ENCODE measurements at regions of chr3 and their contacts with region 1.

Region 1: GRCh38 chr3:94004301-94004910 is 24.0 kb downstream of the STX19 start:
- DNase-seq: peak in 1 of 2 donors; percentile 74
- ATAC-seq: peak; percentile 80 to 95 (median 93)
- H3K4me3 ChIP-seq: no peak overlapping the region
- H3K4me3 Mint-ChIP-seq: peak overlapping the region; percentile 83
- H3K27ac ChIP-seq: no peak overlapping the region
- H3K27ac Mint-ChIP-seq: peak overlapping the region; percentile 40 to 42
- H3K4me1 ChIP-seq: no peaks in the 10 kb centered on the region
- H3K4me1 Mint-ChIP-seq: peaks cover 0 to 4% of the 10 kb centered on the region in 2 donors
- H3K27me3 ChIP-seq: no peaks in the 10 kb centered on the region
- H3K27me3 Mint-ChIP-seq: no peaks in the 10 kb centered on the region
- CTCF ChIP-seq: peak; percentile 80

Region 2: GRCh38 chr3:94069194-94069813 is 64.9 kb after region 1 on chr3:
- intact Hi-C with region 1: loop called (anchors 1 kb)
- DNase-seq: peak in 1 of 2 donors; percentile 39
- ATAC-seq: peak in 1 of 3 donors; percentile 39
- H3K4me3 ChIP-seq: no peak overlapping the region
- H3K4me3 Mint-ChIP-seq: no peak overlapping the region
- H3K27ac ChIP-seq: no peak overlapping the region
- H3K27ac Mint-ChIP-seq: peak overlapping the region; percentile 46 to 67
- H3K4me1 ChIP-seq: no peaks in the 10 kb centered on the region
- H3K4me1 Mint-ChIP-seq: peaks cover 61 to 62% of the 10 kb centered on the region in 2 donors
- H3K27me3 ChIP-seq: no peaks in the 10 kb centered on the region
- H3K27me3 Mint-ChIP-seq: no peaks in the 10 kb centered on the region
- CTCF ChIP-seq: peak; percentile 76

Region 3: DNA sequence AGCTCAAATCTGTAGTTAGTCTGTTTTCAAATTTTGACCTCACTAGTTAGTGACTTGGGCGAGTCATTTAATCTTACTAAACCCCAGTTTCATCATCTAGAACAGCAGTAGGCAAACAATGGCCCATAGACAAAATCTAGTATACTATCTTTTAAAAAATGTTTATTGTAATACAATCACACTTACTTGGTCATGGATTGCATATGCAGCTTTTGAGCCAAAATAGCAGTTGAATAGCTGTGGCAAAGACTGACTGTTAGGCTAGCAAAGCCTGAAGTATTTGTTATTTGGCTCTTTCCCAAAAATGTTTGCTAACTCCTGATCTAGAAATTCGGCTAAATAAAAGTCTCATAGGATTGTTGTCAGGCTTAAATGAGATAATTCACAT is 409.3 kb after region 1 on chr3:
- intact Hi-C with region 1: no loop called
- DNase-seq: no peak
- ATAC-seq: no peak
- H3K4me3 ChIP-seq: no peak overlapping the region
- H3K4me3 Mint-ChIP-seq: no peak overlapping the region
- H3K27ac ChIP-seq: no peak overlapping the region
- H3K27ac Mint-ChIP-seq: no peak overlapping the region
- H3K4me1 ChIP-seq: no peaks in the 10 kb centered on the region
- H3K4me1 Mint-ChIP-seq: no peaks in the 10 kb centered on the region
- H3K27me3 ChIP-seq: no peaks in the 10 kb centered on the region
- H3K27me3 Mint-ChIP-seq: no peaks in the 10 kb centered on the region
- CTCF ChIP-seq: no peak

Region 4: GRCh38 chr3:95434491-95434890 is 1430.1 kb after region 1 on chr3:
- intact Hi-C with region 1: no loop called
- DNase-seq: no peak
- ATAC-seq: no peak
- H3K4me3 ChIP-seq: no peak overlapping the region
- H3K4me3 Mint-ChIP-seq: no peak overlapping the region
- H3K27ac ChIP-seq: no peak overlapping the region
- H3K27ac Mint-ChIP-seq: no peak overlapping the region
- H3K4me1 ChIP-seq: no peaks in the 10 kb centered on the region
- H3K4me1 Mint-ChIP-seq: no peaks in the 10 kb centered on the region
- H3K27me3 ChIP-seq: no peaks in the 10 kb centered on the region
- H3K27me3 Mint-ChIP-seq: no peaks in the 10 kb centered on the region
- CTCF ChIP-seq: no peak

Measured in natural killer cell (primary cell).